H1 (cell line): ENCODE measurements at regions of chr5 and their contacts with region 1.

Region 1: DNA sequence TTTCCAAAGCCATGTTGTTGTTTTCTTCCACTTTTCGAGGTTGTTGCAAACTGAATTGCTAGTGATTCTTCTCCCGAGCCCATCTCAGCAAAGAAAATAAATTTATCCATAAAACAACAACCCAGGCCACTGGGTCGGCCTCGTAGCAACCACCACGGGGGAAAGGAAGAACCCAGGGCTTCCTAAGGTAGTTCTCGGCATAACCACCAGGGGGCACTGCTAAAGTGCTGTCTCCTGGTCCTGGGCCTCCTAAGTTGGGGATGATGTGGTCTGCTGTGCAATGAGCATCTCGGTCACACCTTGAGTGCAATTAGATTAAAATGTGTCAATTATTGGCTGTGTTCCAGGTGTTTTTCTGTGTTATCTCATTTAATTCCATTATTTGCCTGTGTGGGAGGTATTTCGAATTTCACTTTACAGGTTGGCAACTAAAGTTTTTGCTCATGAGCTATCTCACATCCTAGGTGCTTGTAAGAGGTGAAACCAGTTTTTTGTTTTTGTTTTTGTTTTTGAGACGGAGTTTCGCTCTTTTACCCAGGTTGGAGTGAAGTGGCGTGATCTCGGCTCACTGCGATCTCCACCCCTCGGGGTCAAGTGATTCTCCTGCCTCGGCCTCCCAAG is 102.8 kb upstream of the DAP start:
- DNase-seq: peak; percentile 44 to 94
- H3K4me3 ChIP-seq: no peak overlapping the region
- H3K27ac ChIP-seq: no peak overlapping the region
- H3K4me1 ChIP-seq: no peaks in the 10 kb centered on the region
- H3K27me3 ChIP-seq: no peaks in the 10 kb centered on the region
- CTCF ChIP-seq: peak; percentile 78 to 89 (median 83)
- EP300 ChIP-seq: no peak
- POLR2A ChIP-seq: no peak
- RAD21 ChIP-seq: peak; percentile 80 to 84

Region 2: DNA sequence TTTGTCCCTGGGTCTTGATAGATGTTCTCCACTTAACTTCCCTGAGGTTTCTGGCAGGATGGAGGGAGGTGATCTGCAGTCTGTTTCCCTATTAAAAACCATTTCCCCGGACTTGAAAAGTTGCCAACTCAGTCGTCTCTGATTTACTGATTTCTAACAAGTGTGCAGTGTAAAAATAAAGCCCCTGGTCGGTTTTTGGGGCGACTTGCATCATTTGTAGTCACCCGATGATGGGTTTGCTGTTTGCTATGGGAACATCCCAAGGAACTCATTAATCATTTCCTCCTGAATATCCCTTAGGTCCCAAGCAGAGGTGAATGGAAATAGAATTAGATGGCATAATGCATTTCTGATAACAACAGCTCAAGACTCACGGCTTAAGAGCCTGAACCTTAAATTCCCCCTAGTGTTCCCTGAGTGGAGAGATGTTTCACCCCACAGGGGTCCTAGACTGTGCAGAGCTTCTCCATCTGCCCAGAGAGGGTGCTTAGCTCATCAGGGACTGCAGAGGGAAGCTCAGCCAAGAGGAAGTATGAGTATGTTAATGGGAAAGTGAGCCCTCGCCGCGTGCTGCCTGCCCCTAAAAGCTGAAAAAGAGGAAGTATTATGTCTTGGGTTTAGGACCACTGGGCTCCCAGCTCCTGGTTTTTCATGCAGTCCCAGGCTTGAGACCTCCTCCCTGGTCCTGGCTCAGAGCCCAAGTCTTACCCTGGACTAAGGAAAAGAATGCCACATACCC is 12.3 kb after region 1 on chr5:
- CTCF ChIA-PET with region 1: interaction called, 11 read pairs
- POLR2A ChIA-PET with region 1: no interaction called
- DNase-seq: no peak
- H3K4me3 ChIP-seq: no peak overlapping the region
- H3K27ac ChIP-seq: no peak overlapping the region
- H3K4me1 ChIP-seq: no peaks in the 10 kb centered on the region
- H3K27me3 ChIP-seq: no peaks in the 10 kb centered on the region
- CTCF ChIP-seq: no peak
- EP300 ChIP-seq: no peak
- POLR2A ChIP-seq: no peak
- RAD21 ChIP-seq: no peak